PC-9 (cell line): ENCODE measurements at regions of chr17 and their contacts with region 1.

Region 1: DNA sequence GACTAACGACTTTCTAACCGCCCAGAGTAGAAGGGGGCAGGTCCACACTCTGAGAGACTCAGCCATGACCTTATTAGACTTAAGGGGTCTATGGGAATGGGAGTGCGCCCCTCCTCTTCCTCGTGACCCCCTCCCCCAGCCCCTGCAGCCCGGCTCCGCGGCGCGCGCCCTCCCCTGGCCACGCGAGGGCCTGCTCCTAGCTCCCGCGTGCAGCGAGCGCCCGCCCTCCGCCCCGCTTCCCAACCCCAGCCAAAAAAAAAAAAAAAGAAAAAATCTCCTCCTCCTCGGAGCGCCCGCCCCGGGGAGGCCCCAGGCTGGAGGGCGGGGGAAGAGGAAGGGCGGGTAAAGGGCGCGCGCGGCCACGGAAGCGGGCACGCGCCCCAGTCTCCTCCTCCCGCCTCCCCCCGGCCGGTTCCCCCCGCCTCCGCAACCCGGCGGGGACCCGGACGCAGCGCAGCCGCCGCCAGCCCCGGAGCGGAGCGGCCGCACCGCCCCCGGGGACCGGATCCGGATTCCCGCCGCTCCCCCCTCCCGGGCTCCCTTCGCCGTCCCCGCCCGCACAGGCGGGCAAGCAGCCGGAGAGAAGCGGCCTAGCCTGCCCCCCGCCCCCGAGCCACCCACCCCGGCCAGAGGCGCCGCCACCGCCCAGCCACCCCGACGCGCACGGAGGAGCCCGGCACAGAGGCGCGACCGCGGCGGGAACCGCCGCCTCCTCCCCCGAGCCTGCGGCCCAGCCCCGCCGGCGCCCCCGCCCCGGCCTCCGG is 949 bp downstream of the UBTF start:
- DNase-seq: peak; percentile 74 to 87
- H3K4me3 ChIP-seq: peak overlapping the region; percentile 97
- H3K27ac ChIP-seq: 0 out of 2 replicates have a peak overlapping the region, but pooled peaks have one; percentile 3
- H3K4me1 ChIP-seq: peaks cover 22% of the 10 kb centered on the region
- H3K27me3 ChIP-seq: no peaks in the 10 kb centered on the region
- CTCF ChIP-seq: peak; percentile 62

Region 2: GRCh38 chr17:43967251-43967875 is 251.2 kb before region 1 on chr17:
- CTCF ChIA-PET with region 1: no interaction called
- POLR2A ChIA-PET with region 1: no interaction called
- intact Hi-C with region 1: no loop called
- DNase-seq: no peak
- H3K4me3 ChIP-seq: no peak overlapping the region
- H3K27ac ChIP-seq: no peak overlapping the region
- H3K4me1 ChIP-seq: no peaks in the 10 kb centered on the region
- H3K27me3 ChIP-seq: peaks cover 11% of the 10 kb centered on the region; the same call in 1 of the 2 replicates
- CTCF ChIP-seq: no peak

Region 3: GRCh38 chr17:44308320-44308818 is 89.8 kb after region 1 on chr17 and contains the start of gene RUNDC3A:
- CTCF ChIA-PET with region 1: no interaction called
- POLR2A ChIA-PET with region 1: interaction called, 3 read pairs
- intact Hi-C with region 1: loop called (anchors 5 kb)
- DNase-seq: peak; percentile 44 to 74
- H3K4me3 ChIP-seq: peak within 1 kb of the TSS; percentile 56; the same call in 1 of the 2 replicates
- H3K27ac ChIP-seq: no peak within 1 kb of the TSS
- H3K4me1 ChIP-seq: peaks cover 7% of the 10 kb centered on the region
- H3K27me3 ChIP-seq: peaks cover 37% of the 10 kb centered on the region
- CTCF ChIP-seq: no peak
- total RNA-seq, gene RUNDC3A: not detected in 2 replicates

Region 4: DNA sequence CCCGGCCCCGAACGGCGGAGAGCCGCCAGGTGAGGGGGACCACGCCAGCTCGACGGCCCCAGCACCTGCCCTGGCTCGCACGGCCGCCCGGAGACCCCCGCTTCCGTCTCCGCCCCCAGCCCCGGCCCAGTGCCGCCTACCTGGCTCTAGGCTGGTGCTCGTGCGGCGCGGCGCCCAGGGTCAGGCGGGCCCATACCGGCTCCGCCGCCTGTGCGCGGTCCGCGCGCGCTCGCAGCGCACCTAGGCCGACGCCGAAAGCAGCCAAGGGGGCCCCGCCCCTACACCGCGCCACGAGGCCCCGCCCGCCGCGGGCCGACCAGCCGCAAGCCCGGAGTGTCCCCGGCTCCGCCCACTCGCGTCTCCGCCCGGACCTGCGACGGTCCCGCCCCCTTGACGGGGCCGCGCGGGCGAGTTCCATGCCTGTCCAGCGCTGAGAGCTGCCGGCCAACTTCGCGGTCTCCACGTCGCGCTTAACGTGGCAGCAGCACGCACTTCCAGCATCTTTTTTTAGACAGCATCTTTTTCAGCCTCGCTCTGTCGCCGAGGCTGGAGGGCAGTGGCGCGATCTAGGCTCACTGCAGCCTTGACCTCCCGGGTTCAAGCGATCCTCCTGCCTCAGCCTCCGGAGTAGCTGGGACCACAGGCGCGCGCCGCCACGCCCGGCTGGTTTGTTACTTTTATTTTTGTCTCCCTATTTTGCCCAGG is 106.2 kb after region 1 on chr17 and contains the start of gene SLC25A39:
- CTCF ChIA-PET with region 1: no interaction called
- POLR2A ChIA-PET with region 1: no interaction called
- intact Hi-C with region 1: loop called (anchors 1 kb)
- DNase-seq: peak; percentile 75 to 96
- H3K4me3 ChIP-seq: peak within 1 kb of the TSS; percentile 88
- H3K27ac ChIP-seq: peak within 1 kb of the TSS; percentile 57
- H3K4me1 ChIP-seq: 0 out of 2 replicates have a peak, but pooled peaks cover 4% of the 10 kb centered on the region
- H3K27me3 ChIP-seq: no peaks in the 10 kb centered on the region
- CTCF ChIP-seq: no peak
- total RNA-seq, gene SLC25A39: 164 and 204 TPM in 2 replicates